Right ventricle myocardium inferior (tissue), 1 donor: ENCODE measurements at regions of chr20 and their contacts with region 1.

Region 1: DNA sequence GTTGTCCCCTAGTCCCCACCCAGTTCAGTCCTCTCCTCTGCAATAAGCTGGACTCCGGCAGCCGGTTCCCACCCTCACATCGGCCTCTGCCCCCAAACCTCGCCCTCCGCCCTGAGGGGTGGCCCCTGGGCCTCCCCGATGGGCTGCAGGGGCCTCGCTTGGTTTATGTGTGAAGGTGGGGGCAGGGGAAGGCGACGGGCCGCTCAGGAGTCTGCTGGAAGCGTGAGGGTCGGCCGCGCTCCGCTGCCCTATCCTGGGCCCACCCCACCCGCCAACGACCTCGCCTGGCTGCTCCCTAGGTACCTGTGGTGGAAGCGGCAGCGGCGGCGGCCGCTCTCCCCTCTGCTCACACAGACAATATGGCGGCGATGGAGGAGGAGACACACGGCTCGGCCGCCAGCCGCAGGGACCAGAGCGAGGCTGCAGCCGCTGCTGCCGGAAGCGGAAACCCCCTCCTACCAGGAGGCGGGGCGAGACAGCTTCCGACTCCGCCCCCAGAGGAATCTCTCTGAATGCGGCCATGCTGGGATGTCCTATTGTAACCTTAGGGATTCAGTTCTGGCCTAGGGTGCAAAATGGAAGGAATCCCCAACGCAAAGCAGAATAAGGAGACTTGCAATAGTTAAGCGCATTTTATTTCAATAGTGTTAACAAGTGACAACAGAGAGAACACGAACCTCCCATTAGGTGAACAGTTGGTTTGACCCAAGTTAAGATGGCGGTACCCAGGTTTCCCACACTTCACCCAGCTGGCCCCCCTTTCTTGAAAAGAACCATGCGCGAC is at the start of gene CSNK2A1:
- DNase-seq: peak; percentile 97
- ATAC-seq: peak; percentile 99
- total RNA-seq, gene CSNK2A1: 111 TPM

Region 2: GRCh38 chr20:347640-348484 is 195.7 kb before region 1 on chr20:
- intact Hi-C with region 1: loop called (anchors 5 kb)
- DNase-seq: peak; percentile 93
- ATAC-seq: peak; percentile 92

Region 3: DNA sequence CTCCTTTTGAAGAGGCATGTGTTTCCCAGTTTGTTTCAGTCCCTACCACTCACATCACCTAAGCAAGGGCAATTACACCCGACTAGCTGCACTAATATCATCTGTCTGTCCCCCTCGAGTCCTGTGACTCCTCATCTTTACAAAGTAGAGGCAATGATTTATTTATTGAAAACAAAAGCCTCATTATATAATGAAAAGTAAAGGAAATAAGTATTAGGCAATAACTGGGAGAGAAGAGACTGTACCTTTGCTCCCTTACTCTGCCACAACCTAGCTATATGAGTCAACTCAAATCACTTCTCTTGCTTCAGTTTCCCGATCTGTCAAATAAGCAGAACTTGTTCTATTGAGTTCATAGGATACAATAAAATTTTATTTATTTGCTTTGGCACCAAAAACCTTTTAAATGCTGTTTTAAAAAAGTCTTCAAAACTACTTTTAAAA is 38.9 kb before region 1 on chr20:
- intact Hi-C with region 1: no loop called
- DNase-seq: no peak
- ATAC-seq: no peak